IMR-90 (cell line): ENCODE measurements at regions of chr1 and their contacts with region 1.

Region 1: GRCh38 chr1:108828022-108828961 is 28.6 kb downstream of the AKNAD1 start:
- DNase-seq: peak; percentile 85
- ATAC-seq: peak; percentile 33
- H3K4me3 ChIP-seq: no peak overlapping the region
- H3K27ac ChIP-seq: peak overlapping the region; percentile 45; the same call in 1 of the 2 replicates
- H3K4me1 ChIP-seq: peaks cover 18% of the 10 kb centered on the region
- H3K27me3 ChIP-seq: no peaks in the 10 kb centered on the region
- CTCF ChIP-seq: peak; percentile 68
- POLR2A ChIP-seq: no peak
- RAD21 ChIP-seq: peak; percentile 73

Region 2: GRCh38 chr1:108877348-108878159 is 49.3 kb after region 1 on chr1:
- CTCF ChIA-PET with region 1: interaction called, 4 read pairs
- POLR2A ChIA-PET with region 1: no interaction called
- dilution Hi-C with region 1: no loop called
- in situ Hi-C with region 1: no loop called
- intact Hi-C with region 1: loop called (anchors 1 kb)
- DNase-seq: peak; percentile 30
- ATAC-seq: peak; percentile 16
- H3K4me3 ChIP-seq: peak overlapping the region; percentile 83
- H3K27ac ChIP-seq: peak overlapping the region; percentile 53
- H3K4me1 ChIP-seq: no peaks in the 10 kb centered on the region; the same call in 1 of the 2 replicates
- H3K27me3 ChIP-seq: no peaks in the 10 kb centered on the region
- CTCF ChIP-seq: no peak
- POLR2A ChIP-seq: no peak
- RAD21 ChIP-seq: no peak

Region 3: DNA sequence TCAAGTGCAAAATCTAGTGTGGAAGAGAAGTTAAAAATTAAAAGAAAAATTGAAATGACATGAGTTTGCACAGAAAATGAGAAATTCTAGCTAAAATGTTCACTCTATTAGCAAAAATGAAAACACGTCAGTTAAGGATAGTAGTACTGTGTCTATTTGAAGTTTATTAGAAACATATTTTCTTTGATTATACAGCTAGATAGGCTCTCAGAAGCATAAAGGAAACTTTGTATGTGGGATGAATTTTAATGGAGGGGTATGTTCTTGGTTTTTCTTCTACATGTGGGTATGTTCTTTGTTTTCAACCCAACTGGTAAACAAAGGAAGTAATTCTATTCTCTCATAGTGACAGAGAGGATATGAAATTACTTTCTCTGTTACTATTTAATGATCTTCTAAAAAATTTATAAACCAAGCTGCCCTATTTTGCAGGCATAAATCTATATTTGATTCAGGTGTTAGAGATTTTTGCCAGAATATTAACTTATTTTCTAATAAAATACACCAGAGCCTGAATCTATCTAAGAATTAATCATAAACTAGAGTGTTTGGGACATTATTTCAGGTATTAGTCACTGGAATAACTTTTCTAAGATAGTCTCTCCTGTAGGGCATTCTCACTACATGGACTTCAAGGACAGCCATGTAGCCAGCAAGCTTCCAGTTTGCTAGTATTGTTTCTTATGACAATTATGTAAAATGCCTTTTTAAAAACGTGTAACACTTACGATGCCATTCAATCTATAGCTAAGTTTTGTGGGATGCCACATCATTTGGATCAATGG is 64.3 kb after region 1 on chr1:
- CTCF ChIA-PET with region 1: interaction called, 23 read pairs
- POLR2A ChIA-PET with region 1: interaction called, 4 read pairs
- dilution Hi-C with region 1: no loop called
- in situ Hi-C with region 1: loop called (anchors 5 kb)
- intact Hi-C with region 1: no loop called
- DNase-seq: peak; percentile 40
- ATAC-seq: no peak
- H3K4me3 ChIP-seq: no peak overlapping the region
- H3K27ac ChIP-seq: no peak overlapping the region
- H3K4me1 ChIP-seq: peaks cover 4% of the 10 kb centered on the region; the same call in 1 of the 2 replicates
- H3K27me3 ChIP-seq: no peaks in the 10 kb centered on the region
- CTCF ChIP-seq: no peak
- POLR2A ChIP-seq: no peak
- RAD21 ChIP-seq: no peak